B cell (primary cell): ENCODE measurements at regions of chr5 and their contacts with region 1.

Region 1: GRCh38 chr5:157948738-157949410 is 89.9 kb upstream of the CLINT1 start:
- DNase-seq: peak; percentile 89
- ATAC-seq: peak; percentile 98
- H3K4me3 ChIP-seq: no peak overlapping the region
- H3K4me3 Mint-ChIP-seq: peak overlapping the region; percentile 33
- H3K27ac ChIP-seq: no peak overlapping the region
- H3K27ac Mint-ChIP-seq: no peak overlapping the region
- H3K4me1 ChIP-seq: peaks cover 6 to 8% of the 10 kb centered on the region in 2 donors
- H3K4me1 Mint-ChIP-seq: peaks cover 5% of the 10 kb centered on the region
- H3K27me3 ChIP-seq: peaks cover 0 to 4% (median 0%) of the 10 kb centered on the region in 4 experiments
- H3K27me3 Mint-ChIP-seq: peaks cover 18% of the 10 kb centered on the region
- CTCF ChIP-seq: peak; percentile 87

Region 2: GRCh38 chr5:157812086-157812485 is 136.8 kb before region 1 on chr5:
- CTCF ChIA-PET with region 1: interaction called, 171 read pairs
- POLR2A ChIA-PET with region 1: no interaction called
- intact Hi-C with region 1: loop called (anchors 1 kb)
- DNase-seq: no peak
- ATAC-seq: no peak
- H3K4me3 ChIP-seq: no peak overlapping the region
- H3K4me3 Mint-ChIP-seq: no peak overlapping the region
- H3K27ac ChIP-seq: no peak overlapping the region
- H3K27ac Mint-ChIP-seq: no peak overlapping the region
- H3K4me1 ChIP-seq: no peaks in the 10 kb centered on the region
- H3K4me1 Mint-ChIP-seq: no peaks in the 10 kb centered on the region
- H3K27me3 ChIP-seq: no peaks in the 10 kb centered on the region
- H3K27me3 Mint-ChIP-seq: no peaks in the 10 kb centered on the region
- CTCF ChIP-seq: no peak

Region 3: GRCh38 chr5:157820593-157821252 is 128.2 kb before region 1 on chr5:
- CTCF ChIA-PET with region 1: interaction called, 171 read pairs
- POLR2A ChIA-PET with region 1: no interaction called
- intact Hi-C with region 1: loop called (anchors 1 kb)
- DNase-seq: peak; percentile 53
- ATAC-seq: no peak
- H3K4me3 ChIP-seq: no peak overlapping the region
- H3K4me3 Mint-ChIP-seq: no peak overlapping the region
- H3K27ac ChIP-seq: peak overlapping the region in 1 of 2 donors; percentile 39
- H3K27ac Mint-ChIP-seq: peak overlapping the region; percentile 2
- H3K4me1 ChIP-seq: no peaks in the 10 kb centered on the region
- H3K4me1 Mint-ChIP-seq: peaks cover 24% of the 10 kb centered on the region
- H3K27me3 ChIP-seq: no peaks in the 10 kb centered on the region
- H3K27me3 Mint-ChIP-seq: no peaks in the 10 kb centered on the region
- CTCF ChIP-seq: peak; percentile 72

Region 4: GRCh38 chr5:157828944-157829632 is 119.8 kb before region 1 on chr5:
- CTCF ChIA-PET with region 1: interaction called, 22 read pairs
- POLR2A ChIA-PET with region 1: no interaction called
- intact Hi-C with region 1: no loop called
- DNase-seq: no peak
- ATAC-seq: peak; percentile 28
- H3K4me3 ChIP-seq: no peak overlapping the region
- H3K4me3 Mint-ChIP-seq: peak overlapping the region; percentile 29
- H3K27ac ChIP-seq: no peak overlapping the region
- H3K27ac Mint-ChIP-seq: peak overlapping the region; percentile 33
- H3K4me1 ChIP-seq: peaks cover 24 to 51% of the 10 kb centered on the region in 2 donors
- H3K4me1 Mint-ChIP-seq: peaks cover 61% of the 10 kb centered on the region
- H3K27me3 ChIP-seq: no peaks in the 10 kb centered on the region
- H3K27me3 Mint-ChIP-seq: no peaks in the 10 kb centered on the region
- CTCF ChIP-seq: no peak

Region 5: DNA sequence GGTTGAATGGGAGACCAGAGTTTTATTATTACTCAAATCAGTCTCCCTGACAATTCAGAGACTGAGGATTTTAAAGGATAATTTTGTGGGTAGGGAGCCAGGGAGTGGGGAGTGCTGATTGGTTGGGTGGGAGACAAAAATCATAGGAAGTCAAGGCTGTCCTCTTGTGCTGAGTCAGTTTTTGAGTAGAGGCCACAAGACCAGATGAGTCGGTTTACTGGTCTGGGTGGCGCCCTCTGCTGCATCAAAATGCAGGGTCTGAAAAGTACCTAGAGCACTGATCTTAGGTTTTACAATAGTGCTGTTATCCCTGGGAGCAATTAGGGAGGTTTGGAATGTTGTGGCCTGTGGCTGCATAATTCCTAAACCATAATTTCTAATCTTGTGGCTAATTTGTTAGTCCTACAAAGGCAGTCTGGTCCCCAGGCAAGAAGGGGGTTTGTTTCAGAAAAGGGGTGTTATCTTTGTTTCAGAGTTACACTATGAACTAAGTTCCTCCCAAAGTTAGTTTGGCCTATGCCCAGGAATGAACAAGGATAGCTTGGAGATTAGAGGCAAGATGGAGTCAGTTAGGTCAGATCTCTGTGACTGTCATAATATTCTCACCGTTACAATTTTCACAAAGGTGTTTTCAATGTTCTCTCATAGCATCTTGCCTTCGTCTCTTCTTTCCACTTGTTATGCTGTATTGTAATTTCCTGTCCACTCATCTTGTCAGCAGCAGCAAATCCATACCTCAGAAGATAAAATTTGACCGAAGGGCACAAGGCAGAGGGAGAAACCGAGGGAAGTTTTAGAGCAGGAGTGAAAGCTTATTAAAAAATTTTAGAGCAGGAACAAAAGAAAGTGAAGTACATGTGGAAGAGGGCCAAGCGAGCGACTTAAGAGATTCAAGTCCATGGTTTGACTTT is 30.7 kb before region 1 on chr5:
- CTCF ChIA-PET with region 1: interaction called, 12 read pairs
- POLR2A ChIA-PET with region 1: no interaction called
- intact Hi-C with region 1: no loop called
- DNase-seq: peak; percentile 45
- ATAC-seq: no peak
- H3K4me3 ChIP-seq: no peak overlapping the region
- H3K4me3 Mint-ChIP-seq: peak overlapping the region; percentile 77
- H3K27ac ChIP-seq: peak overlapping the region in 1 of 2 donors; percentile 75
- H3K27ac Mint-ChIP-seq: peak overlapping the region; percentile 91
- H3K4me1 ChIP-seq: peaks cover 28 to 30% of the 10 kb centered on the region in 2 donors
- H3K4me1 Mint-ChIP-seq: peaks cover 34% of the 10 kb centered on the region
- H3K27me3 ChIP-seq: no peaks in the 10 kb centered on the region
- H3K27me3 Mint-ChIP-seq: no peaks in the 10 kb centered on the region
- CTCF ChIP-seq: peak; percentile 58

Region 6: GRCh38 chr5:157934600-157934999 is 14.3 kb before region 1 on chr5:
- CTCF ChIA-PET with region 1: interaction called, 11 read pairs
- POLR2A ChIA-PET with region 1: no interaction called
- intact Hi-C with region 1: no loop called
- DNase-seq: no peak
- ATAC-seq: no peak
- H3K4me3 ChIP-seq: no peak overlapping the region
- H3K4me3 Mint-ChIP-seq: no peak overlapping the region
- H3K27ac ChIP-seq: no peak overlapping the region
- H3K27ac Mint-ChIP-seq: no peak overlapping the region
- H3K4me1 ChIP-seq: no peaks in the 10 kb centered on the region
- H3K4me1 Mint-ChIP-seq: no peaks in the 10 kb centered on the region
- H3K27me3 ChIP-seq: no peaks in the 10 kb centered on the region
- H3K27me3 Mint-ChIP-seq: no peaks in the 10 kb centered on the region
- CTCF ChIP-seq: no peak

Region 7: GRCh38 chr5:157994906-157995519 is 46.1 kb after region 1 on chr5:
- CTCF ChIA-PET with region 1: interaction called, 21 read pairs
- POLR2A ChIA-PET with region 1: no interaction called
- intact Hi-C with region 1: no loop called
- DNase-seq: peak; percentile 57
- ATAC-seq: peak; percentile 69
- H3K4me3 ChIP-seq: no peak overlapping the region
- H3K4me3 Mint-ChIP-seq: no peak overlapping the region
- H3K27ac ChIP-seq: no peak overlapping the region
- H3K27ac Mint-ChIP-seq: no peak overlapping the region
- H3K4me1 ChIP-seq: peaks cover 0 to 3% of the 10 kb centered on the region in 2 donors
- H3K4me1 Mint-ChIP-seq: peaks cover 2% of the 10 kb centered on the region
- H3K27me3 ChIP-seq: peaks cover 0 to 4% (median 0%) of the 10 kb centered on the region in 4 experiments
- H3K27me3 Mint-ChIP-seq: peaks cover 5% of the 10 kb centered on the region
- CTCF ChIP-seq: peak; percentile 72

Region 8: DNA sequence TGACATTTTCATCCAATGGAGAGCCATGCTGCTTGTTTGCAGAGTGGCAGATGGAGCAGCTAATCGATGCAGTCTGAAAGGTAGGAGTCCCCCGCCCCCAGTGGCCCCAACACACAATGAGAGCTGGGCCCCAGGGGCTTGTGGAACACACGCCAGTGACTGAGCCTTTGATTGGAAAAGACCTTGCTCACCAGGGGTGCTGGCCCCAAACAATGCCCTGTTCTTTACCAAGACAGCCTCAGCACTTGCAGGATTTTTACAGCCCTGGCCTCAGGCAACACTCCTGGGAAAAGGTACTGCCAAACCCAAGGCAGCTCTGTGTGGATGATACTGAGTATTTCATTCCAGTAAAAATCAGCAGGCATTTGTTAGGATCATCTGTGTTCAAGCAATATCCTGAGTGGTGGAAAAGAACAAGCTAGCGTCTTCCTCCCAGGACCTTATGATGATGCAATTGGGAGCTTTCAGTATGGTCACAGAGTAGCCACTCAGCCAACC is 186.9 kb after region 1 on chr5:
- CTCF ChIA-PET with region 1: no interaction called
- POLR2A ChIA-PET with region 1: no interaction called
- intact Hi-C with region 1: no loop called
- DNase-seq: no peak
- ATAC-seq: no peak
- H3K4me3 ChIP-seq: no peak overlapping the region
- H3K4me3 Mint-ChIP-seq: no peak overlapping the region
- H3K27ac ChIP-seq: no peak overlapping the region
- H3K27ac Mint-ChIP-seq: no peak overlapping the region
- H3K4me1 ChIP-seq: no peaks in the 10 kb centered on the region
- H3K4me1 Mint-ChIP-seq: no peaks in the 10 kb centered on the region
- H3K27me3 ChIP-seq: no peaks in the 10 kb centered on the region
- H3K27me3 Mint-ChIP-seq: no peaks in the 10 kb centered on the region
- CTCF ChIP-seq: no peak